AG04449 (cell line): ENCODE measurements at regions of chr5 and their contacts with region 1.

Region 1: GRCh38 chr5:56900858-56901578 is 8.4 kb upstream of the SETD9 start:
- DNase-seq: no peak
- H3K4me3 ChIP-seq: no peak overlapping the region
- CTCF ChIP-seq: peak; percentile 52

Region 2: GRCh38 chr5:56962286-56962685 is 61.3 kb after region 1 on chr5:
- CTCF ChIA-PET with region 1: no interaction called
- POLR2A ChIA-PET with region 1: no interaction called
- DNase-seq: no peak
- H3K4me3 ChIP-seq: no peak overlapping the region
- CTCF ChIP-seq: no peak

Region 3: GRCh38 chr5:57137401-57137800 is 236.4 kb after region 1 on chr5:
- CTCF ChIA-PET with region 1: interaction called, 55 read pairs
- POLR2A ChIA-PET with region 1: no interaction called
- DNase-seq: no peak
- H3K4me3 ChIP-seq: no peak overlapping the region
- CTCF ChIP-seq: no peak

Region 4: GRCh38 chr5:57221049-57221568 is 320.1 kb after region 1 on chr5:
- CTCF ChIA-PET with region 1: interaction called, 41 read pairs
- POLR2A ChIA-PET with region 1: no interaction called
- DNase-seq: no peak
- H3K4me3 ChIP-seq: no peak overlapping the region
- CTCF ChIP-seq: peak; percentile 46

Region 5: DNA sequence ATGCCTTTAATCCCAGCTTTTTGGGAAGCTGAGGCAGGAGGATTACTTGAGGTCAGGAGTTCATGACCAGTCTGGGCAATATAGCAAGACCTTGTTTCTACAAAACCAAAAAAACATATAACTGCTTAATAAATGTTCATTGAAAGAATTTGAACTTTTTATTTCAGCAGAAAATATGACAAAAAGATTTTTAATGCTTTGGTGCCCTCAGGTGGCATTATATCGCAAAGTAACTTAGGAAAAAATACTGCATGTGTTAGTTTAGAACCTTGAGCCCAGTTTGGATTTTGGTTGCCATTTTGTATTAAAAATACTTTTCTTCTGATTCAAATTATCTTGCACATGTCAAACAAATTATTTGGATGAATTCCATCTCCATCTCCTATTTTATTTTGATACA is 376.1 kb after region 1 on chr5:
- CTCF ChIA-PET with region 1: interaction called, 38 read pairs
- POLR2A ChIA-PET with region 1: interaction called, 3 read pairs
- DNase-seq: no peak
- H3K4me3 ChIP-seq: no peak overlapping the region
- CTCF ChIP-seq: peak; percentile 2